Right ventricle myocardium inferior (tissue), 1 donor: ENCODE measurements at regions of chr22 and their contacts with region 1.

Region 1: GRCh38 chr22:25465949-25466348 is 98.5 kb upstream of the GRK3 start:
- DNase-seq: no peak
- ATAC-seq: no peak

Region 2: DNA sequence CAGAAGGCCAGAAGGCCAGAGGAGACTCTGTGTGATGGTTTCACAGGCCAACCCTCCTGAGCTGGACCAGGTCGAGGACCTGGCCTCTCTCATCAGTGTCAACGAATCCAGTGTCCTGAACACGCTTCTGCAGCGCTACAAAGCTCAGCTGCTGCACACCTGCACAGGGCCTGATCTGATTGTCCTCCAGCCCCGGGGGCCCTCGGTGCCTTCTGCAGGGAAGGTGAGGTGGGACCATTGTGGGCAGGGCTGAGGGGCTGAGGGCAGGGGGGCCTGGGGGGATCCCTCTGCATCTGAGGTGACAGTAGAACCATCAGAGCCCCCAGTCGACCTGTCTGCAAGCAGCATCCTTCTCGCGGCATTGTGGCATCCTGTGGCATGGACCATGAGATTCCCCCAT is 306.3 kb after region 1 on chr22:
- intact Hi-C with region 1: loop called (anchors 2 kb)
- DNase-seq: no peak
- ATAC-seq: no peak